ENCODE measurements at regions of chr2 and their contacts with region 1.

Region 1: GRCh38 chr2:61135510-61135909 is 26.5 kb upstream of the C2orf74 start:
- DNase-seq: peak; percentile 20
- ATAC-seq: peak; percentile 89
- H3K4me3 ChIP-seq: no peak overlapping the region
- H3K27ac ChIP-seq: no peak overlapping the region
- H3K4me1 ChIP-seq: no peaks in the 10 kb centered on the region
- H3K27me3 ChIP-seq: no peaks in the 10 kb centered on the region
- CTCF ChIP-seq: no peak; the same call in 1 of the 2 replicates

Region 2: GRCh38 chr2:61117534-61117933 is 18.0 kb before region 1 on chr2:
- CTCF ChIA-PET with region 1: interaction called, 12 read pairs
- POLR2A ChIA-PET with region 1: no interaction called
- in situ Hi-C with region 1: no loop called
- intact Hi-C with region 1: no loop called
- DNase-seq: no peak
- ATAC-seq: no peak
- H3K4me3 ChIP-seq: no peak overlapping the region
- H3K27ac ChIP-seq: no peak overlapping the region
- H3K4me1 ChIP-seq: no peaks in the 10 kb centered on the region
- H3K27me3 ChIP-seq: no peaks in the 10 kb centered on the region
- CTCF ChIP-seq: no peak

Region 3: DNA sequence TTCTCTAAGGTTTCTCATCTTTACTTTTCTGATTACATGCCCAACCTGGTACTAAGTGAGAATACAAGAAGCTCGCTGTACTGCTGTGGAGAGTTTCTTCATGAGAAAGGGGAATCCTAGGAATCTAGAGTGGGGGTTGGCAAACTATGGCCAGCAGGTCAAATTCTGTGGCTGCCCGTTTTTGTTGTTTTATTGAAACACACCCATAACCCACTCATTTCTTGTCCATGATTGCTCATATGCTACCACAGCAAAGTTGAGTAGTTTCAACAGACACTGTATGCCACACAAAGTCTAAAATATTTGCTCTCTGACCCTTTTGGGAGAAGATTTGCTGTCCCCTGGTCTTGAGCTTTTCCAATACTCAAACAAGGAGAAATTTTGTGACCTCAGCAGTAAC is 85.3 kb after region 1 on chr2:
- CTCF ChIA-PET with region 1: no interaction called
- POLR2A ChIA-PET with region 1: no interaction called
- in situ Hi-C with region 1: no loop called
- intact Hi-C with region 1: no loop called
- DNase-seq: no peak
- ATAC-seq: no peak
- H3K4me3 ChIP-seq: no peak overlapping the region
- H3K27ac ChIP-seq: no peak overlapping the region
- H3K4me1 ChIP-seq: no peaks in the 10 kb centered on the region
- H3K27me3 ChIP-seq: no peaks in the 10 kb centered on the region
- CTCF ChIP-seq: no peak

Region 4: GRCh38 chr2:61470965-61471904 is 335.7 kb after region 1 on chr2 and contains the start of gene USP34:
- CTCF ChIA-PET with region 1: no interaction called
- POLR2A ChIA-PET with region 1: no interaction called
- in situ Hi-C with region 1: no loop called
- intact Hi-C with region 1: no loop called
- DNase-seq: peak; percentile 59
- ATAC-seq: peak; percentile 92
- H3K4me3 ChIP-seq: peak within 1 kb of the TSS; percentile 86 to 95
- H3K27ac ChIP-seq: peak within 1 kb of the TSS; percentile 97
- H3K4me1 ChIP-seq: peaks cover 9% of the 10 kb centered on the region
- H3K27me3 ChIP-seq: no peaks in the 10 kb centered on the region
- CTCF ChIP-seq: no peak
- total RNA-seq, gene USP34: 91.4 TPM